IMR-90 (cell line): ENCODE measurements at regions of chr7 and their contacts with region 1.

Region 1: DNA sequence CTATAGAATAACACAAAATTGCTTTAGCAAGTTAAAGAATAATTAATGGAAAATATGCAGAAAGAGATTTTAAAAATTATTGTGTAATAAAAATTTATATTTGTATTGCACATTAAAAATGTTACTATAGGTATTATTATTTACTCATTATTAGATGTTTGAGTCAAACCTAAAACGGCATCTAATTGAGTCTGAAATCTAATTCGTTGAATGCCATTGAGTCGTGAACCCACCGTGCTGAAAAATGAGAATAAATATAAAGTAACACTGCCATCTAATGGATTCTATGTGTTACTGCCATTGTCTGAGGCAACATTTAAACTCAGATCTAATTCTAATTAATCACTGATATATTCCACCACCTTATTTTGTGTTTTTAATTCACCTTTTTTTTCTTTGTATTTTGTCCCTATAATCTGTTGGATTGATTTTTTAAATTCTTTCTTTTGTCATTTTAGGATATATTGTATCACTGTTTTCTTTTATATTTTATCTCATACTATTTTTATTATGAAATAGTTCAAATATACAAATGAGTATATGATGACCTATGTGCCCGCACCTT is 62.2 kb downstream of the SAMD9 start:
- DNase-seq: peak; percentile 62
- ATAC-seq: peak; percentile 89
- H3K4me3 ChIP-seq: no peak overlapping the region
- H3K27ac ChIP-seq: no peak overlapping the region
- H3K4me1 ChIP-seq: no peaks in the 10 kb centered on the region
- H3K27me3 ChIP-seq: no peaks in the 10 kb centered on the region; the same call in 1 of the 2 replicates
- CTCF ChIP-seq: peak; percentile 82
- POLR2A ChIP-seq: no peak
- RAD21 ChIP-seq: peak; percentile 86

Region 2: GRCh38 chr7:92528188-92528957 is 527.3 kb before region 1 on chr7 and contains the starts of genes PEX1 and RBM48:
- CTCF ChIA-PET with region 1: no interaction called
- POLR2A ChIA-PET with region 1: no interaction called
- dilution Hi-C with region 1: no loop called
- in situ Hi-C with region 1: no loop called
- intact Hi-C with region 1: loop called (anchors 5 kb)
- DNase-seq: peak; percentile 99
- ATAC-seq: peak; percentile 97
- H3K4me3 ChIP-seq: peak within 1 kb of the TSS; percentile 95
- H3K27ac ChIP-seq: peak within 1 kb of the TSS; percentile 92
- H3K4me1 ChIP-seq: peaks cover 2% of the 10 kb centered on the region; the same call in 1 of the 2 replicates
- H3K27me3 ChIP-seq: no peaks in the 10 kb centered on the region
- CTCF ChIP-seq: peak; percentile 49
- POLR2A ChIP-seq: peak; percentile 89
- RAD21 ChIP-seq: peak; percentile 1; the same call in 1 of the 2 replicates
- total RNA-seq, gene PEX1: 12.7 and 13.9 TPM in 2 replicates
- total RNA-seq, gene RBM48: 5.6 and 10.6 TPM in 2 replicates

Region 3: GRCh38 chr7:92682903-92683539 is 372.6 kb before region 1 on chr7:
- CTCF ChIA-PET with region 1: no interaction called
- POLR2A ChIA-PET with region 1: no interaction called
- dilution Hi-C with region 1: no loop called
- in situ Hi-C with region 1: loop called (anchors 5 kb)
- intact Hi-C with region 1: no loop called
- DNase-seq: peak; percentile 34
- ATAC-seq: peak; percentile 48
- H3K4me3 ChIP-seq: no peak overlapping the region
- H3K27ac ChIP-seq: no peak overlapping the region
- H3K4me1 ChIP-seq: peaks cover 9% of the 10 kb centered on the region
- H3K27me3 ChIP-seq: no peaks in the 10 kb centered on the region
- CTCF ChIP-seq: no peak
- POLR2A ChIP-seq: no peak
- RAD21 ChIP-seq: no peak

Region 4: DNA sequence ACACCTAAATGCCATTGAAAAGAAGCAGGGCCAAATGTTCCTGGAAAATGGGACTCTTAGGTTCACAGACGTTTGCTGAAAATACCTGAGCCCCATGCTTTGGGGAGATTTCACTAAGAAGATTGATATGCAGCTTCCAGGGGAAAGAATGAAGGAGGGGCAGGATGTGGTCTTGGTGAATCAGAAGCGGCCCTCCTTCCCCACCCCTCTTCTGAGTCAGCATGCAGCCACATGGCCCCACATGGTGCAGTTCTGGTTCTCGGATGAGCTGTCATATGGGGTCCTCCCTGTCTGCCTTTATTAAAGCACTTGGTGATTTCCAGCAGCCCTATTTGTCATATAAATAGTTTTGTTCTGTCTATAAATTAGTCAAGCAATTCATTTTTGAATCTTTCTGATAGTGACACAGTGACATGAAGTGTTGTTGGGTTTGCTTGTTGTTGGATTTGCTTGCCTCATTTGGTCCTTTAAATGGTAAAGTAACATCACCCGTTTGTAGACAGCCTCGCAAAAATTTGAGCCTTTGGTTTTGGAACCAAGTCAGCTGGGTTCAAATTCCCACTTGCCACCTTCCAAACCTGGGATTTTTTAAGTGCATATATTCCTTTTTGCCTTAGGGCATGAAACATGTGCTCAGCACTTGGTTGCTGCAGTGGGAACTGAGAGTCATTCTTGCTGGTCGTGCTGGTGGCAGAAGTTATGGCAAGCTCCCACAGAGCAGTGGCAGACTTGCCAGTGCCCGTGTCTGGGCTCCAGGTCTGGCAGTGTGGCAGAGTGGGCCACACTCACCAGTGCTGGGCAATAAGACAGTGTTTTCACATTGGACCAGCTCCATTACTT is 151.1 kb before region 1 on chr7:
- CTCF ChIA-PET with region 1: no interaction called
- POLR2A ChIA-PET with region 1: no interaction called
- dilution Hi-C with region 1: no loop called
- in situ Hi-C with region 1: no loop called
- intact Hi-C with region 1: loop called (anchors 10 kb)
- DNase-seq: peak; percentile 97
- ATAC-seq: peak; percentile 99
- H3K4me3 ChIP-seq: no peak overlapping the region
- H3K27ac ChIP-seq: peak overlapping the region; percentile 10; the same call in 1 of the 2 replicates
- H3K4me1 ChIP-seq: peaks cover 6% of the 10 kb centered on the region
- H3K27me3 ChIP-seq: no peaks in the 10 kb centered on the region
- CTCF ChIP-seq: no peak
- POLR2A ChIP-seq: no peak
- RAD21 ChIP-seq: peak; percentile 5; the same call in 1 of the 2 replicates

Region 5: GRCh38 chr7:93015779-93016481 is 39.7 kb before region 1 on chr7:
- CTCF ChIA-PET with region 1: no interaction called
- POLR2A ChIA-PET with region 1: no interaction called
- dilution Hi-C with region 1: no loop called
- in situ Hi-C with region 1: no loop called
- intact Hi-C with region 1: loop called (anchors 2 kb)
- DNase-seq: peak; percentile 45
- ATAC-seq: 0 out of 2 replicates have a peak, but pooled peaks have one; percentile 3
- H3K4me3 ChIP-seq: no peak overlapping the region
- H3K27ac ChIP-seq: peak overlapping the region; percentile 93
- H3K4me1 ChIP-seq: peaks cover 39% of the 10 kb centered on the region
- H3K27me3 ChIP-seq: no peaks in the 10 kb centered on the region
- CTCF ChIP-seq: no peak
- POLR2A ChIP-seq: no peak
- RAD21 ChIP-seq: no peak

Region 6: GRCh38 chr7:93315896-93316295 is 260.3 kb after region 1 on chr7:
- CTCF ChIA-PET with region 1: no interaction called
- POLR2A ChIA-PET with region 1: no interaction called
- dilution Hi-C with region 1: no loop called
- in situ Hi-C with region 1: no loop called
- intact Hi-C with region 1: no loop called
- DNase-seq: no peak
- ATAC-seq: no peak
- H3K4me3 ChIP-seq: no peak overlapping the region
- H3K27ac ChIP-seq: no peak overlapping the region
- H3K4me1 ChIP-seq: peaks cover 3% of the 10 kb centered on the region; the same call in 1 of the 2 replicates
- H3K27me3 ChIP-seq: no peaks in the 10 kb centered on the region
- CTCF ChIP-seq: no peak
- POLR2A ChIP-seq: no peak
- RAD21 ChIP-seq: no peak